ENCODE measurements at regions of chr1 and their contacts with region 1.

Region 1: DNA sequence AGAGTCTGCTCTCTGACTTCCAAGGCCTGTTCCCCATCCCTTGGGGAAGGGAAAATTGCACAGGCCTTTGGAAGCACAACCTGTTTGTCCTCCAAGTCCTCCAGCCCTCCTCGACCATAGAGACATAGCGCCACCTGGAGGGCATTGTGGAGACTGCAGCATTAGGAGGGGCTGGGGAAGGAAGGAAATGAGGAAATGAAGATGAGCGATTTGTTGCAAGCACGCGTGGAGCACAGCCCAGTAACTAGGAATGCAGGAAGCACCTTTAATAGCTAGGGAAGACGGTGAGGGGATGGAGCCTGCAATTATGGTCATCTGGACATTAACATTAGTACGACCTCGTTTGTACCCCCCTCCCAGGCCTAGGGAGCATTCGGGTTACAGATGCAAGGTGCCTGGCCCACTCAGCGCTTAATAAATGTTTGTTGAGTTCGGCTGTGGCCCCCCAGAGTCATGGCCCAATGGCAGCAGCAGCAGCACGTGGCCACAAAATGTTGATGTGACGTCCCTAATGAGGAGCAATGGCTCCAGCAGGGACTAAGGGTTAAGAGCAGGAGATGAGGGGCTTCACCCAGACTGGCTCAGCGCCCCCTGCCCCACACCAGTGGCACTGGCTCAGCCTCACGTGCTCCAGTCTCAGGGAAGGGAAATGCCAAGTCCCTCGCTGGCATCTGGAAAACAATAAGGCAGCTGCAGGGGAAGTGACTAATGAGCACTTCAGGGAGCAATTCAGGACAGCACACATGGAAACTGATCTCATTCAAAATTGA is 8.0 kb upstream of the CAMK2N1 start:
- DNase-seq: peak; percentile 91
- H3K4me3 Mint-ChIP-seq: no peak overlapping the region
- H3K27ac Mint-ChIP-seq: no peak overlapping the region
- H3K4me1 Mint-ChIP-seq: peaks cover 2% of the 10 kb centered on the region
- H3K27me3 Mint-ChIP-seq: no peaks in the 10 kb centered on the region

Region 2: DNA sequence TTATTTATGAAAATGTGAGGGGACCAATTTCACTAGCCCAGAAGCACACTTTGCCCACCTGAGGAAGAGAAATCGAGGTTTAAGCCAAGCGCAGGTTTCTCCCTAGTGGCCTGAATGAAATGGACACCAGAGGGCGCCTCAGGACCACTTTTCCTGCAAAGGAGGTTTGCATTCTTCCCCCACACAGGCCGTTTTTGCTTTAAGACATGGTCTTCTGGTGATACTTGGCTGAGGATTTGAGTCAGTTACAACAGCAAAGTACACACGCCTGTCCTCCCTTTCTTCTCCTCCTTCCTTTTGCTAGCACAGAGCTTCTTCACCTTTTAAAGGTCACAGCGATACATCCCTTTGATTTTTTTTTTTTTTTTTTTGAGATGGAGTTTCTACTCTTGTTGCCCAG is 576.0 kb before region 1 on chr1:
- CTCF ChIA-PET with region 1: no interaction called
- intact Hi-C with region 1: loop called (anchors 5 kb)
- DNase-seq: peak; percentile 93
- H3K4me3 Mint-ChIP-seq: no peak overlapping the region
- H3K27ac Mint-ChIP-seq: no peak overlapping the region
- H3K4me1 Mint-ChIP-seq: no peaks in the 10 kb centered on the region
- H3K27me3 Mint-ChIP-seq: peaks cover 2% of the 10 kb centered on the region

Region 3: GRCh38 chr1:20212685-20213331 is 281.2 kb before region 1 on chr1:
- CTCF ChIA-PET with region 1: interaction called, 98 read pairs
- intact Hi-C with region 1: loop called (anchors 1 kb)
- DNase-seq: peak; percentile 66
- H3K4me3 Mint-ChIP-seq: no peak overlapping the region
- H3K27ac Mint-ChIP-seq: no peak overlapping the region
- H3K4me1 Mint-ChIP-seq: peaks cover 7% of the 10 kb centered on the region
- H3K27me3 Mint-ChIP-seq: peaks cover 21% of the 10 kb centered on the region

Region 4: DNA sequence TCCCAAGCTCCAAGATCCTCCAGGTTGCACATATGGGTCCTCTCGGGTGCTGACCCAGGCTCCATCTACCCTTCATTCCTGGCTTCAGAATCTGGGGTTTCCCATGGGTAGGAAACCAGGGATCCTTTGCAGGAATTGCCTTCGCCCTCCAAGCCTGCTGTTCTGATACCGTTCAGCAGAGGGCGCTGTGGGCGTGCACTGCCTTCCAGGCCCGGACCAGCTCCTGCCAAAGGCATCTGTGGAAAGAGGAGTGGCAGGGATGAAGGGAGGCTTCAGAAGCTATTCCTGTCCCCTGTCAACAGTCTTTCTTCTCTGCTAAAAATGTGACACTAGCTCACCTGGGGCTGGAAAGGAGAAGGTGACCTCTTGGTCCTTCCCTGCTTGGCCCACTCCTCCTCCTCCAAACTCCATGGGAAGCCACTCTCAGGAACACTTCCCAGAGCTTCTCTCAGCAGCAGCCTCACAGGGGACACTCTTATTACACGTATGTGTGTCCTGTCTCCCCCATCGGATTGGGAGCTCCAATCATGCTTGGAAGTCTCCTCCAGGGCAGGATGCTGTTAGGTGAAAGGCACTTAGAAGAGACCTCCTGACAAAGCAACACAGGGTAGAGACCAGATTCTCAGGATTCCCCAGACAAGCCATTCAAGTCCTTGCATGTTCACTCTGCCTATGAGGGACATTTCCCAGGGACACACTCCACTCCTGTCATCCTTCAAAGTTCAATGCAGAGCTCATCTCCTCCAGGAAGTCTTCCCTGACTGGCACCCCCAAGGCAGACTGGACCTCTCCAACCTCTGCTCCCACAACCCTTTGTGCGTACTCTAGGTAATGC is 132.0 kb before region 1 on chr1:
- CTCF ChIA-PET with region 1: interaction called, 19 read pairs
- intact Hi-C with region 1: loop called (anchors 2 kb)
- DNase-seq: peak; percentile 56
- H3K4me3 Mint-ChIP-seq: no peak overlapping the region
- H3K27ac Mint-ChIP-seq: no peak overlapping the region
- H3K4me1 Mint-ChIP-seq: peaks cover 19% of the 10 kb centered on the region
- H3K27me3 Mint-ChIP-seq: peaks cover 60% of the 10 kb centered on the region

Region 5: DNA sequence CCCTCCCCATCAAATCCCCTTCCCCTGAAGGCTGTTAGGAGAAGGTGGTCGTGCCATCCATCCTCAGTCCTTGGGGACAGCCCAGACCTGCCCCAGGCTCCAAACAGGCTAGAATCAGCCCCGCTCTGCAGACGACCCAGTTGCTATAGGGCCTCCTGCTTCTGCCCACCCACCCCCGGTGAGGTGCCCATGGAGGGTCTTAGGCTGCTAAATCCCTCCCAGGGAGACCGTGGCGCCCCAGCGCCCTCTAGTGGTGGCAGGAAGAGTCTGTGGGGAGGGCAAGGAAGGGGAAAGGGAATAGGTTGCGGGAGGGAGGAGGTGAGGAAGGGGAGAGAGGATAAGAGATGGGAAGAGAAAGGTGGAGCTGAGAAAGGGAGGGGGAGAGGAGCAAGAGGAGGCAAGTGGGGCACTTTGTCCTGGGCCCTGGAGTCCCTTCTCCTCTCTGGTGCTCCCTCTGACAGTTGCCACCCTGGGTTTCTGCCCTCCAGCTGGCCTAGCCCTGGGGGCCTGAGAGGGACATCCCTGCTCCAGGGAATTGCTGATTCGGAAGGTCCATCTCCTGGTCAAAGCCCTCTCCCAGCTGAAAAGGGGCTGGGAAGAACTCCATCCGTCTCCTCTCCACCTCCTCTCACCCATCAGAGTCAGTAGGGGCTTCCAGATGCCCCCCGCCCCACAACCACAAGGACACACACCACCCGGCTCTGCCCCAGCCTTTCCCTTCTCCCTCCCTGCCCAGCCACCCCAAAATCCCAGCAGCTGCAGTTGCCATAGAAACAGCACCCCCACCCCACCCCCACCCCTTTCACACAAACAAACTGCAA is 63.5 kb before region 1 on chr1:
- CTCF ChIA-PET with region 1: interaction called, 5 read pairs
- intact Hi-C with region 1: loop called (anchors 2 kb)
- DNase-seq: peak; percentile 61
- H3K4me3 Mint-ChIP-seq: no peak overlapping the region
- H3K27ac Mint-ChIP-seq: no peak overlapping the region
- H3K4me1 Mint-ChIP-seq: peaks cover 20% of the 10 kb centered on the region
- H3K27me3 Mint-ChIP-seq: peaks cover 44% of the 10 kb centered on the region

Region 6: GRCh38 chr1:20551193-20551592 is 57.2 kb after region 1 on chr1:
- CTCF ChIA-PET with region 1: no interaction called
- intact Hi-C with region 1: no loop called
- DNase-seq: no peak
- H3K4me3 Mint-ChIP-seq: no peak overlapping the region
- H3K27ac Mint-ChIP-seq: no peak overlapping the region
- H3K4me1 Mint-ChIP-seq: peaks cover 2% of the 10 kb centered on the region
- H3K27me3 Mint-ChIP-seq: peaks cover 38% of the 10 kb centered on the region

Region 7: GRCh38 chr1:20981915-20982314 is 487.9 kb after region 1 on chr1:
- CTCF ChIA-PET with region 1: no interaction called
- intact Hi-C with region 1: no loop called
- DNase-seq: no peak
- H3K4me3 Mint-ChIP-seq: no peak overlapping the region
- H3K27ac Mint-ChIP-seq: no peak overlapping the region
- H3K4me1 Mint-ChIP-seq: no peaks in the 10 kb centered on the region
- H3K27me3 Mint-ChIP-seq: no peaks in the 10 kb centered on the region